Heart left ventricle (tissue), 16 donors: ENCODE measurements at regions of chr10 and their contacts with region 1.

Region 1: DNA sequence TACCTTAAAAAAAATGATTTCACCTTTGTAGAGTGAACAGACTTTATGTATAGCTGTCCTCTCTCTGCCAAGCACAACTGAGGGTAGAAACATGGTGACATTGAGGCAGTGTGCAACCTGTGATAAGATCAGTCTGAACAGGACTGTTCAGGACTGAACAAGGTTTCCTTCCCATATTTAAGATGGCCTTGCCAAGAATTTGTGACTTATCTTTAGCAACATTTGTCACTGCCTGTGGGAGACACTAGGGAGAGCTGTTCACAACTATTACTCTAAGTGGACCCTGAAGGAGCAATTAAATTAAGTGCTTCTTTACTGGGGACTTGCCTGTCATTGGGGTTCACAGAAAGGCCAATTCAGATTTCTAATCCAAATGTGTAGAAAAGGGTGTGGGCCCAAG is 6.7 kb downstream of the OR13A1 start:
- DNase-seq: no peak
- ATAC-seq: peak in 1 of 4 donors; percentile 49
- H3K4me3 ChIP-seq: no peak overlapping the region
- H3K27ac ChIP-seq: no peak overlapping the region
- H3K4me1 ChIP-seq: no peaks in the 10 kb centered on the region
- H3K27me3 ChIP-seq: peaks cover 0 to 13% (median 0%) of the 10 kb centered on the region in 9 donors
- CTCF ChIP-seq: peak in 6 of 12 donors; percentile 5 to 24 (median 18)
- POLR2A ChIP-seq: no peak

Region 2: GRCh38 chr10:45071043-45071813 is 237.5 kb before region 1 on chr10:
- intact Hi-C with region 1: no loop called
- DNase-seq: no peak
- ATAC-seq: no peak
- H3K4me3 ChIP-seq: no peak overlapping the region
- H3K27ac ChIP-seq: no peak overlapping the region
- H3K4me1 ChIP-seq: no peaks in the 10 kb centered on the region
- H3K27me3 ChIP-seq: peaks cover 0 to 5% (median 0%) of the 10 kb centered on the region in 9 donors
- CTCF ChIP-seq: no peak
- POLR2A ChIP-seq: no peak

Region 3: GRCh38 chr10:45373576-45374349 is 65.1 kb after region 1 on chr10 and contains the start of gene ALOX5:
- intact Hi-C with region 1: loop called in 1 of 10 experiments (anchors 10 kb)
- DNase-seq: peak; percentile 68 to 90 (median 73)
- ATAC-seq: peak; percentile 58 to 85 (median 84)
- H3K4me3 ChIP-seq: peak within 1 kb of the TSS; percentile 30 to 75 (median 47)
- H3K27ac ChIP-seq: peak within 1 kb of the TSS in 3 of 12 donors; percentile 16 to 81 (median 21)
- H3K4me1 ChIP-seq: peaks cover 0 to 51% (median 17%) of the 10 kb centered on the region in 12 donors
- H3K27me3 ChIP-seq: peaks cover 0 to 52% (median 34%) of the 10 kb centered on the region in 9 donors
- CTCF ChIP-seq: no peak
- POLR2A ChIP-seq: no peak
- total RNA-seq, gene ALOX5: 1.3 to 36.1 (median 5.8) TPM

Region 4: DNA sequence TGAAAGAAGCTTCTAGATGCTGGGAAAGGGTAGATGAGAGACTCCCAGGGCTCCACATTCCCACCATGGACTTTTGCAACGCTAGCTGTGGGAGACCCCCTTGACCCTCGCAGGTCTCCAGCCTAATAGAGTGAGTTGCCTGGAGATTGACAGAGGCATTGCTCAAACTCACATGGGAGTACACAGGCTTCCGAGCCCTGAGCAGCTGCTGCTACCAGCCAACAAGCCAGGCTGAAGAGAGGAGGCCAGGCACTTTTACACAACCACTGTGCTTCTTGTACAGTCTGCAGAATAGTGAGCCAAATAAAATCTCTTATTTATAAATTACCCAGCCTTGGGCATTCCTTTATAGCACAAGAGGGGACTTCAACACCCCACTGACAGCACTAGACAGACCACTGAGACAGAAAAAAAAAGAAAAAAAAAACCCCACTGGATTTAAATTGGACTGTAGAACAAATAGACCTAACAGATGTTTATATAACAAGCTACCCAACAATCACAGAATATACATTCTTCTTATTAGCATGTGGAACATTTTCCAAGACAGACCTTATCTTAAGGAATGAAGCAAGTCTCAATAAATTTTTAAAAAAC is 217.7 kb after region 1 on chr10:
- intact Hi-C with region 1: no loop called
- DNase-seq: no peak
- ATAC-seq: peak in 2 of 4 donors; percentile 30 to 45
- H3K4me3 ChIP-seq: no peak overlapping the region
- H3K27ac ChIP-seq: no peak overlapping the region
- H3K4me1 ChIP-seq: peaks cover 0 to 9% (median 0%) of the 10 kb centered on the region in 12 donors
- H3K27me3 ChIP-seq: no peaks in the 10 kb centered on the region
- CTCF ChIP-seq: no peak
- POLR2A ChIP-seq: no peak